WTC11 (cell line): ENCODE measurements at regions of chr10 and their contacts with region 1.

Region 1: DNA sequence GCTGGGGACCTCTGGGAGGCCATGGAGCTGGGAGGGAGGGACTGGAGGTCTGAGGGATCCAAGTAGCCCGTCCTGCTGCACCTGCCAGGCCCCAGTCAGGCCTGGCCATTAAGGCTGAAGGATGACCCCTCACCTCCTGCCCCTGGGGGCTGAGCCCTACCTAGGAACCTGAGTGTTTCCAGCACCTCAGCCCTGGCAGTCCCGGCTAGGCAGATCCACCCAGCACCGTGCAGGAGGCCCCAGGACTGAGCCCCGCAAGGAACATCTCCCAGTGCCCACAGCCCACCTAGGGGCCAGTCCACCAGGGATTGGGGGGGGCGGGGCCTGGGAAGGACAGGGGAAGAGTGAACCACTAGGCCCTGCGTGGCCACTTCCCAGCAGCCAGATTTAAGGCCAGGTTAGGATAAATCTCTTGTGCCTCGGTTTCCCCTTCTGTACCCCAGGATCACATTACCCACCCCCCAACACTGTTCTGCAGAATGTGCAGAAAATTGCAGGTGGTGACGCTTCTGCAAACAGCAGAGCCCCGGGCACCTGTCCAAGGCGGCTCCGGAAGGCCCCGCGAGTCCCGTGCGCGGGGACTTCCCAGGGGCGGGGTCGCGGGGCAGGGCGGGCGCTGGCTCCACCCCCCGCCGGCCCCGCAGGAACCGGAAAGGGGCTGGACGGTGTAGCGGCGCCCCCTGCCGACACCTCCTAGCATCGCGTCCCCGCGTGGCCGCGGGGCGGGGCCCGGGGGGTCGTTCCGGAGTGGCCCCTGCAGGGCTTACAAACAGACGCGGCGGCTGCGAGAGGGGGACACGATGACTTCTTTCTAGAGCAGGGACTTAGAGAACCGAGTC is 55.9 kb downstream of the PWWP2B start:
- DNase-seq: peak; percentile 87
- ATAC-seq: peak; percentile 46
- H3K4me3 Mint-ChIP-seq: peak overlapping the region; percentile 38
- H3K27ac Mint-ChIP-seq: no peak overlapping the region
- H3K4me1 Mint-ChIP-seq: peaks cover 15% of the 10 kb centered on the region
- H3K27me3 Mint-ChIP-seq: no peaks in the 10 kb centered on the region
- CTCF ChIP-seq: peak; percentile 92

Region 2: GRCh38 chr10:132297526-132297925 is 155.3 kb before region 1 on chr10:
- CTCF ChIA-PET with region 1: no interaction called
- POLR2A ChIA-PET with region 1: no interaction called
- DNase-seq: peak; percentile 53
- ATAC-seq: peak; percentile 62
- H3K4me3 Mint-ChIP-seq: no peak overlapping the region
- H3K27ac Mint-ChIP-seq: peak overlapping the region; percentile 87; the same call in 1 of the 2 replicates
- H3K4me1 Mint-ChIP-seq: peaks cover 10% of the 10 kb centered on the region
- H3K27me3 Mint-ChIP-seq: no peaks in the 10 kb centered on the region
- CTCF ChIP-seq: no peak

Region 3: DNA sequence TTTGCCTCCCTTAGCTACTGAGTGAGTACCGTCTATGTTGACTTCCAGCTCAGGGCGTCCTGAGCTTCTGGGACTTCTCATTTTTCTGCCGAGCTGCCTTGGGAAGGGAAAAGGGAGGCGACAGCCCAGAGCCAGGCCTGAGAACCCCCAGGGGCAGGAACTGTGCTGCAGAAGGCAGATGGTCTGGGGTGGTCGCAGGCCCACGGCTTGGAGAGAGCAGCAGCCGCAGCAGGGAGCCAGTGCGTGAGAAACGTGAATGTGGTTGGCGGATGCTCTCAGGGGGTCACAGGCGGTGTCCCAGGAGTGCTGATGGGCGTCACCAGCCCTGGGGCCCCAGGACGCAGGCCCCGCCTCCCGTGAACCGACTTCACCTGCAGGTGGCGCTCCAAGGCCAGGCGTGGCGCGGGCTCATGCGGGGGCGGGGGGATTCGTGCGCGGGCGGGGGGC is 65.1 kb before region 1 on chr10:
- CTCF ChIA-PET with region 1: interaction called, 11 read pairs
- POLR2A ChIA-PET with region 1: interaction called, 3 read pairs
- DNase-seq: peak; percentile 86
- ATAC-seq: peak; percentile 73
- H3K4me3 Mint-ChIP-seq: peak overlapping the region; percentile 55
- H3K27ac Mint-ChIP-seq: peak overlapping the region; percentile 60
- H3K4me1 Mint-ChIP-seq: peaks cover 6% of the 10 kb centered on the region
- H3K27me3 Mint-ChIP-seq: no peaks in the 10 kb centered on the region
- CTCF ChIP-seq: peak; percentile 56; the same call in 1 of the 2 replicates

Region 4: GRCh38 chr10:132407243-132407806 is 45.5 kb before region 1 on chr10:
- CTCF ChIA-PET with region 1: interaction called, 22 read pairs
- POLR2A ChIA-PET with region 1: no interaction called
- DNase-seq: no peak
- ATAC-seq: no peak
- H3K4me3 Mint-ChIP-seq: peak overlapping the region; percentile 53
- H3K27ac Mint-ChIP-seq: peak overlapping the region; percentile 99
- H3K4me1 Mint-ChIP-seq: peaks cover 45% of the 10 kb centered on the region
- H3K27me3 Mint-ChIP-seq: no peaks in the 10 kb centered on the region
- CTCF ChIP-seq: no peak

Region 5: GRCh38 chr10:132427016-132427771 is 25.7 kb before region 1 on chr10:
- CTCF ChIA-PET with region 1: no interaction called
- POLR2A ChIA-PET with region 1: no interaction called
- DNase-seq: no peak
- ATAC-seq: no peak
- H3K4me3 Mint-ChIP-seq: no peak overlapping the region
- H3K27ac Mint-ChIP-seq: no peak overlapping the region
- H3K4me1 Mint-ChIP-seq: no peaks in the 10 kb centered on the region
- H3K27me3 Mint-ChIP-seq: no peaks in the 10 kb centered on the region
- CTCF ChIP-seq: no peak